ENCODE measurements at regions of chr6 and their contacts with region 1.

Region 1: DNA sequence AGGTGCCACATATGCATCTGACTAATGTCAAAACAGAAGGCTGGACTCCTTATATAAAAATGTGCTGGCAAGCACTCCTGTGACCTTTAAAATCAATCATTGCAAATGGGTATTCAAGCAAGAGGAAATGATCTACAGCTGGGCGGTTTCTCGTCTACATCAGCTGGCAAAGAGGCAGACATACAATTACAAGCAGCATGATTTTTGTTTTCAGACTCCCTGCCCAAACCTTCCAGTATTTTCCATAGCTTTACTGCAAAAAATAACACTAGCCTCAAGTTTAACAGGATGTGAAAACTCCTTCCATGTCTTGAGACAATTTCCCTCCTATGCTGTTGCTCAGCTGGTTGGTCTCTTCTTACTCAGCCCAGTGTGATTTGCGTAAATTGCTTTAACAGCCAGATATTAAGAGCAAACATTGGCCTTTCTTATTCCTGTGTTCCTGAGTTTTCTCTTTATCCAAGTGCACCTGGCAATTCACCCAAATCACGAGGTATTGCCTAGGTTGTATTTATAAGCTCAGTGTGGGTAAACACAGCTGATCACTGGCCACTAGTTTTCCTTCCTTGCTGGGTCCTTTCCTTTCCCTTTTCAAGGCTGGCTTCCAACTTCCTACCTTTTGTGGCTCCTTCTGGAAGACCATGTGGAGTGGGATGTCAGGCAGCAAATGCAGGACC is 130.4 kb downstream of the MOXD1 start:
- DNase-seq: no peak
- H3K4me3 ChIP-seq: no peak overlapping the region
- H3K27ac ChIP-seq: no peak overlapping the region
- H3K27me3 ChIP-seq: no peaks in the 10 kb centered on the region
- CTCF ChIP-seq: no peak

Region 2: GRCh38 chr6:131979515-131980337 is 291.1 kb before region 1 on chr6:
- CTCF ChIA-PET with region 1: no interaction called
- POLR2A ChIA-PET with region 1: no interaction called
- DNase-seq: peak; percentile 84
- H3K4me3 ChIP-seq: no peak overlapping the region
- H3K27ac ChIP-seq: peak overlapping the region; percentile 80
- H3K27me3 ChIP-seq: no peaks in the 10 kb centered on the region
- CTCF ChIP-seq: no peak

Region 3: GRCh38 chr6:132259070-132259469 is 11.8 kb before region 1 on chr6:
- CTCF ChIA-PET with region 1: interaction called, 14 read pairs
- POLR2A ChIA-PET with region 1: no interaction called
- DNase-seq: no peak
- H3K4me3 ChIP-seq: no peak overlapping the region
- H3K27ac ChIP-seq: no peak overlapping the region
- H3K27me3 ChIP-seq: no peaks in the 10 kb centered on the region
- CTCF ChIP-seq: peak; percentile 52

Region 4: DNA sequence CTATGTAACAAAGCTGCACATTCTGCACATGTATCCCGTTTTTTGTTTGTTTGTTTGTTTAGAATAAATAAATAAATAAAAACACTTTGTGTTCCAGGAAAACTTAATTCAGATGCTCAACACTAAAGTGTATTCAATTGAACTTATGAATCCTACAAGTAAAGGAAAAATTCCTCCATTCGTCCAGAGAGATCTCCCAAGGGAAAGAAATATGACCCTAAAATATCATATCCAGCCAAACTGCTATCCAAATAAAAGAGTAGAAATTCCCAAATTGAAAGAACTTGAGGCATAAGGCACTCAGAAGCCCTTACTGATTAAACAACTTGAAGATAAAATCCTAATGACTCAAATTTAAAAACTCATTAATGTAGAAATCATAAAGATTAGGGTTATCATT is 40.1 kb after region 1 on chr6:
- CTCF ChIA-PET with region 1: no interaction called
- POLR2A ChIA-PET with region 1: no interaction called
- DNase-seq: no peak
- H3K4me3 ChIP-seq: no peak overlapping the region
- H3K27ac ChIP-seq: no peak overlapping the region
- H3K27me3 ChIP-seq: no peaks in the 10 kb centered on the region
- CTCF ChIP-seq: no peak

Region 5: GRCh38 chr6:132465530-132466485 is 194.9 kb after region 1 on chr6:
- CTCF ChIA-PET with region 1: no interaction called
- POLR2A ChIA-PET with region 1: no interaction called
- DNase-seq: no peak
- H3K4me3 ChIP-seq: no peak overlapping the region
- H3K27ac ChIP-seq: no peak overlapping the region
- H3K27me3 ChIP-seq: no peaks in the 10 kb centered on the region
- CTCF ChIP-seq: no peak

Measured in AG04450 (cell line).